PC-3 (cell line): ENCODE measurements at regions of chrX and their contacts with region 1.

Region 1: DNA sequence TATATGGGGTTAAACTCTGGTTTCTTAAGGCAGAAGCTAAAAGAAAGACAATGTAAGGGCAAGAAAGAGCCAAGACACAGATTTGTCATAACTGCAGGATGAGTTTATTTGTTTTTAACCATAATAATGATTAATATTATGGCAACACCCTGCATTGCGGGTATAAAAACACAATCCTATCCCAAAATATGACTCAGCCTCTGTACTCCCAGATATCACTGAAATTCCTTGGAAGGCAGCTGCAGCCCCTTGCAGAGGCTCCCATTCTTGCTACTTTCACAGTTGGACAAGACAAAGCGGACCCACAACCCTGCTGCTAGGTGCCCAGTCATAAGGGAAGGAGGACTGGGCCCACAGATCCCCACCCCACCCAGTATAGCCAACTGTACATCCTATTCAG is 20.4 kb upstream of the FGF16 start:
- DNase-seq: peak; percentile 81
- ATAC-seq: peak; percentile 77
- H3K4me3 ChIP-seq: no peak overlapping the region; the same call in 1 of the 2 replicates
- H3K27ac ChIP-seq: peak overlapping the region; percentile 83
- H3K4me1 ChIP-seq: peaks cover 36% of the 10 kb centered on the region
- H3K27me3 ChIP-seq: no peaks in the 10 kb centered on the region
- CTCF ChIP-seq: no peak

Region 2: DNA sequence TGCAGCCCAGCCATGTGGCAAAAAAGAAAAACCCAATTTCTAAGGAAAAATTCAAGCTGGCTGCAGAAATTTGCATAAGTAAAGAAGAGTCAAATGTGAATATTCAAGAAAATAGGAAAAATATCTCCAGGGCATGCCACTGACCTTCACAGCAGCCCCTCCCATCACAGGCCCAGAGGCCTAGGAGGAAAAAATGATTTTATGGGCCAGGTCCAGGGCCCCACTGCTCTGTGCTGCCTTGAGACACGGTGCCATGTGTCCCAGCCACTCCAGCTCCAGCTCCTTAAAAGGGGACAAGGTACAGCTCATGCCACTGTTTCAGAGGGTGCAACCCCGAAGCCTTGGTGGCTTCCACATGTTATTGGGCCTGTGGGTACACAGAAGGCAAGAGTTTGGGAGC is 162.3 kb before region 1 on chrX:
- CTCF ChIA-PET with region 1: no interaction called
- POLR2A ChIA-PET with region 1: no interaction called
- intact Hi-C with region 1: no loop called
- DNase-seq: no peak
- ATAC-seq: no peak
- H3K4me3 ChIP-seq: no peak overlapping the region
- H3K27ac ChIP-seq: no peak overlapping the region
- H3K4me1 ChIP-seq: no peaks in the 10 kb centered on the region
- H3K27me3 ChIP-seq: no peaks in the 10 kb centered on the region
- CTCF ChIP-seq: no peak

Region 3: GRCh38 chrX:77493677-77494553 is 67.1 kb after region 1 on chrX:
- CTCF ChIA-PET with region 1: no interaction called
- POLR2A ChIA-PET with region 1: no interaction called
- intact Hi-C with region 1: loop called (anchors 5 kb)
- DNase-seq: peak; percentile 66
- ATAC-seq: peak; percentile 64; the same call in 1 of the 2 replicates
- H3K4me3 ChIP-seq: no peak overlapping the region
- H3K27ac ChIP-seq: no peak overlapping the region
- H3K4me1 ChIP-seq: no peaks in the 10 kb centered on the region
- H3K27me3 ChIP-seq: no peaks in the 10 kb centered on the region
- CTCF ChIP-seq: no peak

Region 4: GRCh38 chrX:77505227-77505626 is 78.4 kb after region 1 on chrX:
- CTCF ChIA-PET with region 1: no interaction called
- POLR2A ChIA-PET with region 1: no interaction called
- intact Hi-C with region 1: no loop called
- DNase-seq: no peak
- ATAC-seq: no peak
- H3K4me3 ChIP-seq: no peak overlapping the region
- H3K27ac ChIP-seq: no peak overlapping the region
- H3K4me1 ChIP-seq: 0 out of 2 replicates have a peak, but pooled peaks cover 2% of the 10 kb centered on the region
- H3K27me3 ChIP-seq: no peaks in the 10 kb centered on the region
- CTCF ChIP-seq: no peak

Region 5: DNA sequence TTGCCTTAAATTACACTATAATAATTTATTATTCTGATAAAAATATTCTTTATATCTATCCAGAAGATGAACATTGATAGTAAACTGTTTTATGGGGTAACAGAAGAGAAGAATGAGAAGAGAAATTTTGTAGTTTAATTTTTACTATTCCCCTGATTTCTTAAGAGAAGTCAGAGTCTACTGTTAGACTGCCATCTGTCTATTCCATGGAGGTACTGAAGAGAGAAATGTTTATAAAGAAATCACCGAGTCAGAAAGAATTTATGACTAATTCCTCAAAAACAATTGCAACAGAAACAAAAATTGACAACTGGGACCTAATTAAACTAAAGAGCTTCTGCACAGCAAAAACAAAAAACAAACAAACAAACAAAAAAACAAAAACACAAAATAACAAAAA is 170.3 kb after region 1 on chrX:
- CTCF ChIA-PET with region 1: interaction called, 3 read pairs
- POLR2A ChIA-PET with region 1: no interaction called
- intact Hi-C with region 1: loop called (anchors 5 kb)
- DNase-seq: peak; percentile 43
- ATAC-seq: no peak
- H3K4me3 ChIP-seq: no peak overlapping the region
- H3K27ac ChIP-seq: no peak overlapping the region
- H3K4me1 ChIP-seq: peaks cover 4% of the 10 kb centered on the region; the same call in 1 of the 2 replicates
- H3K27me3 ChIP-seq: no peaks in the 10 kb centered on the region
- CTCF ChIP-seq: peak; percentile 58